Sciatic nerve (tissue), 2 donors: ENCODE measurements at regions of chr9 and their contacts with region 1.

Region 1: GRCh38 chr9:117779760-117780159 is 75.6 kb downstream of the TLR4 start:
- DNase-seq: no peak
- ATAC-seq: no peak

Region 2: GRCh38 chr9:117672397-117672796 is 107.4 kb before region 1 on chr9:
- intact Hi-C with region 1: no loop called
- DNase-seq: no peak
- ATAC-seq: no peak

Region 3: DNA sequence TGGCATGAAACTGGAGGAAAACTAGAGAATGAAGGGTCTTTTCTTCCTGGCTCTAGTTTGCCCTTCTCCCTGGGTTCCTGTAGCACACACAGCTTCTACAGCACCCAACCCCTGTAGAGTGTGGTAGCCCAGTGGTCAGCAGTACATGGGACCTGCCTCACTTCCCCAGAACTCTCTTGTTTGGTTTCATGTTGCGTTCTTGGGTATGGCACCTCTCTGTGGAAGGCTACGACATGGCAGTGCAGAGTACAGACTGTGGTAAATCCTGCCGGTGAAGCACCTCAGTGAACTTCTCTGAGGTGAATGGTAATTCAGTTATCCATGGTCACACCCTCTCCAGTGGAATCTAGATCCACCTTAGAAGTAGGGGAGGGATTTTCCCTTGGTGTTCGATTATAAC is 30.0 kb after region 1 on chr9:
- intact Hi-C with region 1: loop called (anchors 1 kb)
- DNase-seq: no peak
- ATAC-seq: no peak